ENCODE measurements at regions of chr22 and their contacts with region 1.

Region 1: DNA sequence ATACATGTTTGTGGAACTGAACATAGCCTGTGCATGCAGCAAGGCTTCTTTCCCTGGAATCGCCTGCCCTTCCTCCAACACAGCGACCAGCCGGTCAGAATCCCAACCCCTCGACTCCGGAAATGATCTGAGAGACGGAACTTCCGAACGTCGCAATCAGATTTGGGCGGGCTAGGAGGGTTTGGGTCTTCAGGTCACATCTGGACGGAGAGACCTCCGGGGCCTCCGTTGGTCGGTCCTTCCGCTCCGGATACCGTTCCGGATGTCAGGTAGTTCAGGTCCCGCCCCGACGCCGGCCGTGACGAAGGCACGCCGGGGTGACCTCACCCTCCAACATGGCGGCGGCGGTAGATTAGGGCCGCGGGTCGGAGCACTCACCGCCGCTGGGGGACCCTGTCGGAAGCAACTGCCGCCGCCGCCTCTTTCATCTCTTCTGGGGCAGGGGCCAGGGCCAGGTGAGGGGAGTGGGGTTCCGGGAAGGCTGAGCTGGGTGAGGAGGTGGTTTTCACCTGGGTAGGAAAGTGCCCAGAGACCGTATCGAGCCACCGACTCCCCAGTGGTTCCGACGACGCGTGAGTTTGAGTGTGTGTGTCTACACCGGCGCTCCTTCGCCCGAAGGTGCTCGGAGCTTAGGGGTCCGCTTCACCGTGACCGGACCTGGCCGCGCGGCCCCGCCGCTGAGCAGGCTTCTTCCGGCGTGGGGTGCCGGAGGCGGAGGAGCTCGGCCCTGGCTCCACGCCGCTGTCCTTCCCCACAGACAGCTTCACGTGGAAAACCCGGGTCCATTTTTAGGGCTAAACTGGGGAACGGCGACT is at the start of gene BCL2L13:
- DNase-seq: peak; percentile 71 to 96
- H3K4me3 ChIP-seq: peak within 1 kb of the TSS; percentile 70 to 91
- H3K27ac ChIP-seq: peak within 1 kb of the TSS; percentile 96 to 100
- H3K4me1 ChIP-seq: peaks cover 5 to 11% of the 10 kb centered on the region in 2 donors
- H3K27me3 ChIP-seq: no peaks in the 10 kb centered on the region
- CTCF ChIP-seq: no peak
- total RNA-seq, gene BCL2L13: 4.6 TPM

Region 2: DNA sequence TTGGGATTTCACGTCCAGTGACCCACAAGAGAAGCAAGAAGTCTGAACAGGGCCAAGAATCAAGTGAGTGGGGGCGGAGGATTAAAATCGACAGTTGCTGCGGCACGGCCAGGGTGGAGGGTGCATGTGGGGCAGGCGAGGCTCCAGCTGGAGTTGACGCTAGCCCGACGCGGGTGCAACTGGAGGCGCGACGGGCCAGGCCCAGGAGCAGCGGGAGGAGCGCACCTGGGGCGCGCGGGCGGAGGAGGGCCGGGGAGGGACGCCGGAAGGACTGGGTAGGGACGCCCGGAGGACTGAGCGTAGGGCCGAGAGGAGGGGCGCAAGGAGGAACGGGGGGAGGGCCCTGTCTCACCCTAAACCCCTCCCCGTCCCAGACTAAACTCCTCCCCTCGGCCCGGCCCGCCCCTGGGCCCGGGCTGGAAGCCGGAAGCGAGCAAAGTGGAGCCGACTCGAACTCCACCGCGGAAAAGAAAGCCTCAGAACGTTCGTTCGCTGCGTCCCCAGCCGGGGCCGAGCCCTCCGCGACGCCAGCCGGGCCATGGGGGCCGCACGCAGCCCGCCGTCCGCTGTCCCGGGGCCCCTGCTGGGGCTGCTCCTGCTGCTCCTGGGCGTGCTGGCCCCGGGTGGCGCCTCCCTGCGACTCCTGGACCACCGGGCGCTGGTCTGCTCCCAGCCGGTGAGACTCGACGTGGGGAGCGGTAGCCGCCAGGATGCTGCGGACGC is 553.9 kb before region 1 on chr22 and contains the start of gene IL17RA:
- intact Hi-C with region 1: loop called (anchors 2 kb)
- DNase-seq: peak; percentile 57 to 94
- H3K4me3 ChIP-seq: peak within 1 kb of the TSS; percentile 73 to 97
- H3K27ac ChIP-seq: peak within 1 kb of the TSS; percentile 78 to 94
- H3K4me1 ChIP-seq: peaks cover 4 to 8% of the 10 kb centered on the region in 2 donors
- H3K27me3 ChIP-seq: no peaks in the 10 kb centered on the region
- CTCF ChIP-seq: no peak
- total RNA-seq, gene IL17RA: 84.1 TPM

Region 3: DNA sequence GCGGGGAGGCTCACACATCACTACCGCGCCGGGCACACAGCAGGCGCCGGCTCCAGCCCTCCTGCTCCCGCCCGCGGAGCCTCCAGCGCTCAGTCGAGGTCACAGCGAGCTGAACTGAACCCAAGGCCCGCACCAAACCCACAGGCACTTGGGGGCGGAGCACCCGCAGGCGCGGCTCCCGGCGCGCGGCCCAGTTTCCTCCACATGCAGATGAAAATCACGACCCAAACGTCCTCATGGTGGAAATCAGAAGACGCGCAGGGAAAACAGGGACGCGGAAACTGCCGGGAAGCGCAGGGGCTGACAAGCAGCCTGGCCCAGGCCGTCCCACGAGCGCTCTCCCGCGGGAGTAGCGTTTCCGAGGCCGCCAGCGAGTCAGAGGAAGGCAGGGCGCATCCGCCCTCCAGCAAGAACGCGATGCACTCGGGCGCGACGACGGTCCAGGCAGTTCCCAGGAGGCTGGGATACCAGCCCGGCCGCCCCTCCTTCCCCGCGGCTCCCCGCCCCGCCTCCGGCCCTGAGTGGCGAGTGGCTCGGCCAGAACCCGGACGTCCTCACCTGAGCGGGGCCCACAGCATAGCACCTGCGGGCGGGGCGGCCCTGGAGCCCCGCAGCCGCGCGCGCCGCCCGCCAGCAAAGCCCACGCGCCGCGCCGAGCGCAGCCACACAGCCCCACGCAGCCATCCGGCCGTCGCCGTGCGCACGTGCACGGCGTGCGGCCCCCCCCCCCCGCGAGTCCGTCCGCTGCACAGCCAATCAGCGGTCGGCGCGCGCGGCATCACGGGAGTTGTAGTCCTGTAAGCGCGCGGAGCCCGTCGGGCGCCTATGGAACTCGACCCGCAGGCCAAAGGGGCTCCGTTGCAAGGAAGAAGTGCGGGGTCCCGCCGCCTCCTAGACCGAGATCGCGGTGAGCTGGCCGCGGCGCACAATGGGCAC is 479.8 kb before region 1 on chr22 and contains the start of gene HDHD5:
- intact Hi-C with region 1: loop called (anchors 5 kb)
- DNase-seq: peak; percentile 31 to 93
- H3K4me3 ChIP-seq: peak within 1 kb of the TSS; percentile 73 to 81
- H3K27ac ChIP-seq: peak within 1 kb of the TSS; percentile 90
- H3K4me1 ChIP-seq: peaks cover 9 to 20% of the 10 kb centered on the region in 2 donors
- H3K27me3 ChIP-seq: no peaks in the 10 kb centered on the region
- CTCF ChIP-seq: no peak
- total RNA-seq, gene HDHD5: 55.8 TPM

Region 4: DNA sequence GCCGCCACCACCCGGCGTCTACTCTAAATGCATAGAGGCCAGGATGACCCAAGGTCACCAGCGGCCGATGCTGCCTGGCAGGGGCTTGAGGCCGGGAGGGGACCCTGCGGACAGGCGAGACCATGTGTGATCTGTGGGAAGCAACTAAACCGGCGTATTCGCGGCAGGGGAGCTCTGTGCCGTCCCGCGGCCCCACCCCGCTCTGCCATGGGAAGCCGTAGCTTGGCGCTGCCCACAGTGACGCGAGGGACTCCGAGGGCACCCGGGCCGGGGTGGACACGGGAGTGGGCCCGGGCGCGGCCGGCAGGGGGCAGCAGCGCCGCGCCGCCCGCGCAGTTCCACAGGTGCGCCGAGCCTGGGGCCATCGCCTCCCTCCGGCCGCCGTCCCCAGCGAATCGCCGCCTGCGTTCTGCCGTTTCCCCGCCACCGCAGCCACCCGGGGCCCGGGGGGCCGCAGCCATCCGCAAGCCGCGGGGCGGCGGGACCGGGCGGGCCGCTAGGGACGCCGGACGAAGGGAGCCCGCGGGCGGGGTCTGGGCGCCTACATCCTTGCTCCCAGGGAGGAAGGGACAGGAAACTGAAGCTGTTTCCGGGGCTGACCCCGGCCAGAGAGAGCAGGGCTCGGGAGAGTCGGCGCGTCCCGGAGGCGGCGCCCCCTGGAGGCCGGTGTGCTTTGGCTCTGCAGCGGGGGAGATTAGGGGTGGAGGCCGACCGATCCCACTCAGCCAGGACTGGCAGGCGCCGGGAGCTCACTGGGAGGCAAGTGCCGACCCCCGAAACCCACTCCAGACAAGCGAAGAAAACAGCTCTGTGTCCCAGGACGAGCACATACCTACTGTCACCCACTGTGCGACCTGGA is 467.1 kb before region 1 on chr22:
- intact Hi-C with region 1: loop called (anchors 5 kb)
- DNase-seq: peak; percentile 42 to 94
- H3K4me3 ChIP-seq: peak overlapping the region; percentile 78 to 92
- H3K27ac ChIP-seq: peak overlapping the region; percentile 93 to 98
- H3K4me1 ChIP-seq: peaks cover 0 to 10% of the 10 kb centered on the region in 2 donors
- H3K27me3 ChIP-seq: no peaks in the 10 kb centered on the region
- CTCF ChIP-seq: peak; percentile 78 to 89 (median 83)

Region 5: DNA sequence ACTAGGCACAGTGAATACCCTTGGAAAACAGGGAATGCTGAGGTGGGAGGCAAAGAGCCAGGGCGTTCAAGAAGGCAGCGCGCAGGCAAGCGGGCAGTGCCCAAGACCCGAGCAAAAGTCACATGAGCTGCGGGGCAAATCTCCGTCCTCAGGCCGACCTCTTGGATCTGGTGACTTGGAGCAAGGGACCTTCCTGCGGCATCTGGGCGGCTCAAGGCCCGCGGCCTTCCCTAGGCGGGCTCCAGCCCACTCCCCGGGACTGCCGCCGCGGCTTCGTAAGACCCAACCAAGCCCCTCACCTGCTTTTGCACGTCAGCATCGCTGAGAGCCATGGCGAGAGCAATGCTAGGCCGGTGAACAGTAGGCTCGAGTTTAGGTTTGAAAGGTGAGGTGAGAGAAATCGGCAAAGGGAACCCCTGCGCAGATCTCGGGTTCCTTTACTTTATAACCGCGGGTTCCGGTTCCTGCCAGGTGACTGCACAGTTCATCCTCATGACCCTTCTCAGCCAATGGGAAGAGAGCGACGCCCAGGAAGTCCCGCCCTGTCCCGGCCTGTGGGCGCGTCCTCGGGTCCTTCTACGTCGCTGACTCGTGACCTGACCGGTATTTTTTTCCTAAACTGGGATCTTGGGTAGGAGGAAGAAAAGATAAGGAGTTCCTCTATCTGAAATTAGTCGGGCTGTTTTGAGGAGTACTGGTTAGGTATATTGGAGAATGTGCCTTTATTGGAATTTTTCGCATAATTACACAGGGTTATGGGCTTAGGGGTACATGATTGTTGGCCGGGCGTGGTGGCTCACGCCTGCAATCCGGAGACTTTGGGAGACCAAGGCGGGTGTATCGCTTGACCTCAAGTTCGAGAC is 10.1 kb before region 1 on chr22 and contains the start of gene ATP6V1E1:
- intact Hi-C with region 1: loop called (anchors 1 kb)
- DNase-seq: peak; percentile 90 to 98
- H3K4me3 ChIP-seq: peak within 1 kb of the TSS; percentile 94 to 95
- H3K27ac ChIP-seq: peak within 1 kb of the TSS; percentile 86 to 92
- H3K4me1 ChIP-seq: peaks cover 13% of the 10 kb centered on the region in 2 donors
- H3K27me3 ChIP-seq: no peaks in the 10 kb centered on the region
- CTCF ChIP-seq: no peak
- total RNA-seq, gene ATP6V1E1: 94.6 TPM

Region 6: GRCh38 chr22:17706018-17706900 is 67.6 kb after region 1 on chr22:
- intact Hi-C with region 1: loop called (anchors 5 kb)
- DNase-seq: peak; percentile 21 to 76
- H3K4me3 ChIP-seq: peak overlapping the region; percentile 42 to 59
- H3K27ac ChIP-seq: peak overlapping the region; percentile 65 to 67
- H3K4me1 ChIP-seq: no peaks in the 10 kb centered on the region
- H3K27me3 ChIP-seq: no peaks in the 10 kb centered on the region
- CTCF ChIP-seq: no peak

Measured in ascending aorta (tissue), 2 donors.